CD4-positive, alpha-beta T cell (primary cell): ENCODE measurements at regions of chr17 and their contacts with region 1.

Region 1: GRCh38 chr17:78250891-78251794 is 19.7 kb downstream of the TMEM235 start:
- DNase-seq: peak; percentile 73 to 92 (median 84)
- ATAC-seq: peak; percentile 35
- H3K4me3 ChIP-seq: peak overlapping the region; percentile 52
- H3K4me3 Mint-ChIP-seq: peak overlapping the region; percentile 96
- H3K27ac ChIP-seq: peak overlapping the region; percentile 22 to 84
- H3K27ac Mint-ChIP-seq: peak overlapping the region; percentile 98
- H3K4me1 ChIP-seq: peaks cover 72% of the 10 kb centered on the region
- H3K4me1 Mint-ChIP-seq: peaks cover 51% of the 10 kb centered on the region
- H3K27me3 ChIP-seq: no peaks in the 10 kb centered on the region
- H3K27me3 Mint-ChIP-seq: no peaks in the 10 kb centered on the region
- CTCF ChIP-seq: peak; percentile 100

Region 2: DNA sequence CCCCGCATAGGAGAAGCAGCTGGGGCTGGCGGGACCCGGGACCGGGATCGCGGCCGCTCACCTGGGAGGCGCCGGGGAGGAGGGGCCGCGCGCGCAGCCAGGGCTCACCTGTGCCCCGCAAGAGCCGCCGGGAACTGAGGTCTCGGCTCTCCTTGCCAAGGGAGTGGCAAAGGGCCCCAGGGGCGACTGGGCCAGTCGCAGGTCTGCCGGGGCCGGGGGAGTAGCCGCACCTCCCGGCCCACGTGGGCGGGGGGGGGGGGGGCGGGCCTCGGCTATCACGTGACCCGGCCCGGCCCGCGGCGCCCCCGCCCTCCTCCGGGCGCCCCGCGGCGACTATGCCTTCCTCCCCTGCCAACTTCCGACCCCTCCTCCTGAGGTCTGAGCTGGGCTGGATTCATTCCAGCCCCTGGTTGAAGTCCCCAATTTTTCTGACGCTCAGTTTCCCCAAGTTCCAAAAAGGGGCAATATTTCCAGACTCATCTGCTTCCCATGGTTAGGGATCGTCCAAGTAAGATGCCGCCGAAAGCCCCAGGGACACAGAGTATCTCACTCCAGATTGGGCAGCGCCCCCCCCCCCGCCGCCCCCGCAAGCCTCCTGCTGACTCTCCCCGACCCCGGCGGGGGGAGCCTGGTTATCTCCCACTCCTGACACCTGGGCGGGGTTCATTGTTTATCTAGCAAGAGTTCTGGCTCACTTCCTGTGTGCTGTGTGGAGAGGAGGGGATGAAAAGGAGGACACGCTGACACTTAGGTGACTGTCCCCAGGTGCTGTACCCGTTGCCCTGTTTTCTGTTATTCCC is 122.4 kb before region 1 on chr17 and contains the start of gene TMC6:
- CTCF ChIA-PET with region 1: interaction called, 3 read pairs
- POLR2A ChIA-PET with region 1: interaction called, 20 read pairs
- intact Hi-C with region 1: loop called (anchors 5 kb)
- DNase-seq: peak; percentile 58 to 89 (median 75)
- ATAC-seq: peak; percentile 43
- H3K4me3 ChIP-seq: peak within 1 kb of the TSS; percentile 94
- H3K4me3 Mint-ChIP-seq: peak within 1 kb of the TSS; percentile 100
- H3K27ac ChIP-seq: peak within 1 kb of the TSS; percentile 75 to 92
- H3K27ac Mint-ChIP-seq: peak within 1 kb of the TSS; percentile 96
- H3K4me1 ChIP-seq: peaks cover 76% of the 10 kb centered on the region
- H3K4me1 Mint-ChIP-seq: peaks cover 56% of the 10 kb centered on the region
- H3K27me3 ChIP-seq: no peaks in the 10 kb centered on the region
- H3K27me3 Mint-ChIP-seq: no peaks in the 10 kb centered on the region
- CTCF ChIP-seq: no peak
- total RNA-seq, gene TMC6: 645 to 659 TPM

Region 3: DNA sequence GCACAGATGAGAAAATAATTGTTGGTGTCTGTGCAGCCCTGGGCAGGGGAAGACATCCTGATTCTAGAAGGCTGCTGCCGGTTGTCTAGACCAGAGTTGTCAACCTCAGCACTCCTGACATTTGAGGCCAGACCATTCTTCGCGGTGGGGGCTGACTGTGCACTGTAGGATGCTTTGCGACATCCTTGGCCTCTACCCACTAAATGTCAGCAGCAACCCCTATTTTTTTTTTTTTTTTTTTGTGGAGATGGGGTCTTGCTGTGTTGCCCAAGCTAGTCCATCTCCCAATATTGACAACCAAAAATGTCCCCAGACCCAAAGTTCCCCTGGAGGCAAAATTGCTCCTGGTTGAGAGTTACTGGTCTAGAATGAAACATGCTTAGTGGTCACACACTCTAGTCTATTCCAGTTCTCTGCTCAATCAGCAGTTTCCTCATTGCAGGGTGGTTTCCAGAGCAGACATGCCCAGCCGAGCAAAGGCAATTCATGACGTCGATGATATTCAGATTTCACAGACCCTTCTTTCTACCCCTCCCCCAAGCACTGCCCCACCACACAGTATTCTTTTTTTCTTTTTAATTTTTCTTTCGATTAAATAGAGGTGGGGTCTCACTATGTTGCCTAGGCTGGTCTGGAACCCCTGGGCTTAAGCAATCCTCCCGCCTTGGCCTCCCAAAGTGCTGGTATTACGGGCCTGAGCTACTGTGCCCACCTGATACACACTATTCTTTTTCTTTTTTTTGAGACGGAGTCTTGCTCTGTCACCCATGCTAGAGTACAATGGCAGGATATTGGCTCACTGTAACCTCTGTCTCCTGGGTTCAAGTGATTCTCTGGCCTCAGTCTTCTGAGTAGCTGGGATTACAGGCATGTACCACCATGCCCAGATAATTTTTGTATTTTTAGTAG is 96.0 kb before region 1 on chr17:
- CTCF ChIA-PET with region 1: no interaction called
- POLR2A ChIA-PET with region 1: no interaction called
- intact Hi-C with region 1: no loop called
- DNase-seq: peak in 2 of 14 experiments; percentile 51 to 56
- ATAC-seq: peak; percentile 57
- H3K4me3 ChIP-seq: no peak overlapping the region
- H3K4me3 Mint-ChIP-seq: no peak overlapping the region
- H3K27ac ChIP-seq: no peak overlapping the region
- H3K27ac Mint-ChIP-seq: no peak overlapping the region
- H3K4me1 ChIP-seq: peaks cover 4% of the 10 kb centered on the region
- H3K4me1 Mint-ChIP-seq: peaks cover 4% of the 10 kb centered on the region
- H3K27me3 ChIP-seq: no peaks in the 10 kb centered on the region
- H3K27me3 Mint-ChIP-seq: no peaks in the 10 kb centered on the region
- CTCF ChIP-seq: no peak

Region 4: DNA sequence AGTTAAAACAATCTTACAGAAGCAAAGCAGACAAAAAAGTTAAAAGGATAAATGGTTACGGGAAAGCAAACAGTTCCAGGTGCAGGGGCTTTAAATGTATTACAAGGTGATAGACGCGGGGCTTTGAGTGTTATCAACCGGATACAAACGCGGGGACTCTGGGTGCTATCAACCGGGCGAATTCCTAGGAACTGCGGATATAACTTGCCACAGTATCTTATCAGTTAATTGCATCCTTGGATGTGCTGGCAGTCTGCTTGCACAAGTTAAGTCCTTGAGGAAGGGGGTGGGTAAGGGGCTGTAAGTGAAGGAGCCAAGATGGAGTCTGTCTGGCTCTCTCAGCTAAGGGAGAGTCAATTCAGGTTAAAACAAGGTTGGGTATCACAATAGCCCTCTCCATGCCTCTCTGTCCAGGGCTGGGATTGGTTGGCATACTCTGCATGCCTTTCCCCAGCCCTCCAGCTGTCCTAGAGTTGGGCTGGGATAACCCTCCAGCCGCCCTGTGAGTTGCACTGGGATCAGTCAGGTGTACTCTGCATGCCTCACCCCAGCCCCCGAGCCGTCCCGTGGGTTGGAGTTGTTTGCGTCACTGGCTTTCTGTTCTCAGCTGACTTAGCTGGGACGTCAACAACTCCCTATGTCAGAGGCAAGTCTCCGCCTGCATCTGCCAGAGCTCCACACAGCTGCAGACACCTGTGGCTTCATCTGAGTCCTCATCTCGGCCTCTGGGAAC is 21.2 kb after region 1 on chr17:
- CTCF ChIA-PET with region 1: interaction called, 14 read pairs
- POLR2A ChIA-PET with region 1: interaction called, 21 read pairs
- intact Hi-C with region 1: loop called in 1 of 2 experiments (anchors 1 kb)
- DNase-seq: peak; percentile 47 to 88 (median 64)
- ATAC-seq: peak; percentile 90
- H3K4me3 ChIP-seq: no peak overlapping the region
- H3K4me3 Mint-ChIP-seq: peak overlapping the region; percentile 59
- H3K27ac ChIP-seq: peak overlapping the region in 1 of 2 donors; percentile 30
- H3K27ac Mint-ChIP-seq: peak overlapping the region; percentile 95
- H3K4me1 ChIP-seq: peaks cover 50% of the 10 kb centered on the region
- H3K4me1 Mint-ChIP-seq: peaks cover 48% of the 10 kb centered on the region
- H3K27me3 ChIP-seq: no peaks in the 10 kb centered on the region
- H3K27me3 Mint-ChIP-seq: no peaks in the 10 kb centered on the region
- CTCF ChIP-seq: no peak

Region 5: GRCh38 chr17:78341559-78342448 is 90.7 kb after region 1 on chr17:
- CTCF ChIA-PET with region 1: interaction called, 7 read pairs
- POLR2A ChIA-PET with region 1: interaction called, 24 read pairs
- intact Hi-C with region 1: no loop called
- DNase-seq: peak in 3 of 14 experiments; percentile 33 to 67 (median 63)
- ATAC-seq: no peak
- H3K4me3 ChIP-seq: peak overlapping the region; percentile 19
- H3K4me3 Mint-ChIP-seq: peak overlapping the region; percentile 51
- H3K27ac ChIP-seq: peak overlapping the region in 1 of 2 donors; percentile 7
- H3K27ac Mint-ChIP-seq: peak overlapping the region; percentile 99
- H3K4me1 ChIP-seq: peaks cover 79% of the 10 kb centered on the region
- H3K4me1 Mint-ChIP-seq: peaks cover 73% of the 10 kb centered on the region
- H3K27me3 ChIP-seq: no peaks in the 10 kb centered on the region
- H3K27me3 Mint-ChIP-seq: no peaks in the 10 kb centered on the region
- CTCF ChIP-seq: no peak

Region 6: DNA sequence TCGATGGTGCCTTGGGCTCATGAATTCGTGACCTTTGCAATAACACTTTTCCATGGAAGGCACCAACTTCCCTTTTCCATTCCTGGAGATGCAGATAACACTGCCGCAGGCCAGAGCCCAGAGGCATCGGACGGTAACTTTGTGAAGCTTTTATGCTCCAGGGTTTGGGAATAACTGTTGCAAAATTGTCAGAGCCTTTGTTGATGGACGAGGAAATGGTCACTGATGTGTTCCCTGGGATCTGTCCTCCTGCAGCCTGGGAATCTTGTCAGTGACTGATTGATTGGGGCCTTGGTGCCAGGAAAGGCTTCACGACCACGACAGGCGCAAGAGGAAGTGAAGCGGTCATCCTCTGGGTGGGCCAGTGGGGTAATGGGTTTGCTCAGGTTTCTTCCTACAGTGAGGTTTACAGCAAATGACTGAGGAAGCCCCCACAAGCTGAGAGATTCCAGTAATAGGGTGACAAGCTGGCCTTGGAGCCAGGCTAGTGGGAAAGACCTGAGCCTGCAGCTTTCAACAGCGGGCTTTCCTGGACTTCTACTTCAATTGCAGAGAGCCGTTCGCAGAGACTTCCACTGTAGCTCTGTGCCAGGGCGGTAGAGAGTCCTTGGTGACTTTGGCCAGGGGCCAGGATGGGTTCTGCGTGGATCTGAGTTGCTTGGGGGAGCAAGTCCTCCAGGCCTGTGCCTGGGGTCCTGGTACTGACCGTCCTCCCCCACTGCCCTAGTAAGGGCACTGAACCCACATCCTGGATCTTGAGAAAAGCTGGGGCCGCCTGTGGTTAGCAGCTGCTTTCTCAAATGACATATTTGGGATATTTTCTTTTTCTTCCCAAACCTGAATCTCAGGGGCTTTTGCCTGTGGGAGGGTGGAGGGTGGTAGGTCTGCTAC is 164.9 kb after region 1 on chr17:
- CTCF ChIA-PET with region 1: interaction called, 35 read pairs
- POLR2A ChIA-PET with region 1: interaction called, 24 read pairs
- intact Hi-C with region 1: loop called in 1 of 2 experiments (anchors 2 kb)
- DNase-seq: no peak
- ATAC-seq: no peak
- H3K4me3 ChIP-seq: no peak overlapping the region
- H3K4me3 Mint-ChIP-seq: peak overlapping the region; percentile 3
- H3K27ac ChIP-seq: peak overlapping the region in 1 of 2 donors; percentile 23
- H3K27ac Mint-ChIP-seq: peak overlapping the region; percentile 91
- H3K4me1 ChIP-seq: peaks cover 58% of the 10 kb centered on the region
- H3K4me1 Mint-ChIP-seq: peaks cover 76% of the 10 kb centered on the region
- H3K27me3 ChIP-seq: no peaks in the 10 kb centered on the region
- H3K27me3 Mint-ChIP-seq: no peaks in the 10 kb centered on the region
- CTCF ChIP-seq: no peak